Right cardiac atrium (tissue), 5 donors: ENCODE measurements at regions of chr1 and their contacts with region 1.

Region 1: DNA sequence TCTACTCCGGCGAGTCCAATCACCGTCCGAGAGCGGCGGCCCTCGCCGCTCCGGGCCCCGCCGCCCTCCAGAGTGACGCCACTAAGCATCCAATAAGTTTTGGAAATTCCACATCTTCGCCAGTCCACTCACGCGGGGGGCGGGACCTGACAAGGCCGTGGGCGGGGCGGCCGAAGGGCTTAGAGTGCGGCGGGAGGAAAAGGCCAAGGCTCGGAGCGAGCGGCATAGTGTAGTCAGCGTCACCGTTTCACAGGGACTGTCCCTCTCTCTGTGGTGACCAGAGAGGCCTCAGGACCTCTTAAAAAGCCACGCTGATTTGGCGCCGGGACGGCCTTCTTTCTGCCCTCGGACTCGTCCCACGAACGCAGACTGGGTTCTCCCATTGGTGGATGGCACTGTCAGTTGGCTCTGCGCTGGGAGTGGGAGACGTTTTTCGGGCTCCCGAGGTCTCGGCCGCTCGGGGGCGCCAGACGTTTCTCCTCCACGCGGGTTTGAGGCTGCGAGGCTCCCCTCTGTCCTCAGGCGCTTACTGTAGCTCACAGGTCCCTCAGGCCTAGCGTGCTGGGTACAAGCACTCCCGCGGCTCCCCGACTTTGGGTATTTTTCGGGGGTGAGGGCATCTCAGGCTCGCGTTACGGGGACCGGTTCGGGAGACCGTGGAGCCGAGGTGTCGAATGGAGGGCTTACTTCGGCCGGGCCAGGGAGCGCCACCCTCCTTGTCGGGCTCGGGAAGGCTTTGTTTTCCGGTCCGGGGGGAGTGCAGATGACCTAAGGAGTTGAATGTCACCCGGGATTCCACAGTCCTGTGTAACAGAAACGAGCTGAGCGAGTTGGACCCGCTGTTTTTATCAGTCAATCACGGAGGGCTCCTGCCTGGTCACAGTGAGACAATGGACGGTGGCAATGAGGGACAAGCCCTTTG is 488 bp upstream of the TRIM45 start:
- DNase-seq: peak; percentile 97 to 99 (median 98)
- ATAC-seq: peak; percentile 99
- H3K4me3 ChIP-seq: peak overlapping the region; percentile 91
- H3K27ac ChIP-seq: peak overlapping the region; percentile 98
- H3K4me1 ChIP-seq: no peaks in the 10 kb centered on the region
- H3K27me3 ChIP-seq: no peaks in the 10 kb centered on the region

Region 2: GRCh38 chr1:117067533-117068370 is 54.3 kb before region 1 on chr1:
- intact Hi-C with region 1: loop called in 3 of 4 experiments (anchors 5 to 10 kb)
- DNase-seq: peak in 1 of 3 donors; percentile 62
- ATAC-seq: peak; percentile 86 to 90
- H3K4me3 ChIP-seq: no peak overlapping the region
- H3K27ac ChIP-seq: no peak overlapping the region
- H3K4me1 ChIP-seq: no peaks in the 10 kb centered on the region
- H3K27me3 ChIP-seq: no peaks in the 10 kb centered on the region

Region 3: GRCh38 chr1:117077267-117077666 is 44.8 kb before region 1 on chr1:
- intact Hi-C with region 1: loop called in 1 of 4 experiments (anchors 10 kb)
- DNase-seq: no peak
- ATAC-seq: no peak
- H3K4me3 ChIP-seq: no peak overlapping the region
- H3K27ac ChIP-seq: no peak overlapping the region
- H3K4me1 ChIP-seq: no peaks in the 10 kb centered on the region
- H3K27me3 ChIP-seq: no peaks in the 10 kb centered on the region

Region 4: DNA sequence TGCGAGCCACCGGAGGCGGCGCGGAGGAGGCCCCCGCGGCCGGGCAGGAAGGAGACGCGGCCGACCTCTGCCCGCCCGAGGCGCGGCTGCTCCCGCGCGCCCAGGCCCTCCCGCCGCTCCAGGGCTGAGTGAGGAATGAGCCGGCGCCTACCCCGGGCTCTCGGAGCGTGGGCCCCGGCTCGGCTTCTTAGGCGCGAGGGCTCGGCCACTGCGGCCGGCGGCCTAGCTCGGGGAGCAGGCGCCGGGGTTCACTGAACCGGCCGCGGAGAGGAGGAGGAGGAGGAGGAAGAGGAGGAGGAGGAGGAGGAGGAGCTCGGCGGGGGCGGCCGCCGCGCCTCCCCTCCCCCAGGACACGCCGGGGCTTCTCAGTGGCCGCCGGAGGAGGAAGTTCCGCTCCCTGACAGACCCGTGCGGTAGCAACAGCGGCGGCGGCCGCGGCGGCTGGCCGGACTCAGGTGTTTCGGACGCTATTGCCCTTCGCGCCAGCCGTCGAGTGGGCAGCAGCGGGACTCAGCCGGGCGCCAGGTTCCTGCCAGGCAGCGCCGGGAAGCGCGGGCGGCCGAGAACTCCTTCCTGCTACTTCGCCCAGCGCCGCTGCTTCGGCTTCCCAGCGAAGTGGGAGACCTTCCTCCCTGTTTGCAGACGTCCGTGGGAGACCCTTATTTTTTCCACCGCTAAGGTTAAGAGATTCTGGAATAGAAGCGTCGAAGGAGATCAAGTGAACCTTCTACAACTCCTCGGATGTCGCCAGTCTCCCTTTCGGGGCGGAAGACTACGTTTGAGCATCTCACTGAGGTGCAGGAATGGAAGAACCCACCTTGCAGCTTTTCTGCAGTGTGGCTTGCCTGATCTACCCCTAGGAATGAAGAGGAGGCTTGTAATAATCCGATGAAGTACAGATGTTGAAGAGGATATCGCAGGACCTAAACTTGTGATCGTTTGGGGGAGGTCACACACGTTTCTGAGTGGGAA is 245.3 kb after region 1 on chr1 and contains the start of gene MAN1A2:
- intact Hi-C with region 1: loop called in 1 of 4 experiments (anchors 10 kb)
- DNase-seq: peak; percentile 91 to 96 (median 96)
- ATAC-seq: peak; percentile 96 to 97
- H3K4me3 ChIP-seq: peak within 1 kb of the TSS; percentile 75
- H3K27ac ChIP-seq: peak within 1 kb of the TSS; percentile 90
- H3K4me1 ChIP-seq: peaks cover 9% of the 10 kb centered on the region
- H3K27me3 ChIP-seq: no peaks in the 10 kb centered on the region
- total RNA-seq, gene MAN1A2: 38.1 to 49.0 (median 45.5) TPM